Naive thymus-derived CD4-positive, alpha-beta T cell (primary cell): ENCODE measurements at regions of chr14 and their contacts with region 1.

Region 1: DNA sequence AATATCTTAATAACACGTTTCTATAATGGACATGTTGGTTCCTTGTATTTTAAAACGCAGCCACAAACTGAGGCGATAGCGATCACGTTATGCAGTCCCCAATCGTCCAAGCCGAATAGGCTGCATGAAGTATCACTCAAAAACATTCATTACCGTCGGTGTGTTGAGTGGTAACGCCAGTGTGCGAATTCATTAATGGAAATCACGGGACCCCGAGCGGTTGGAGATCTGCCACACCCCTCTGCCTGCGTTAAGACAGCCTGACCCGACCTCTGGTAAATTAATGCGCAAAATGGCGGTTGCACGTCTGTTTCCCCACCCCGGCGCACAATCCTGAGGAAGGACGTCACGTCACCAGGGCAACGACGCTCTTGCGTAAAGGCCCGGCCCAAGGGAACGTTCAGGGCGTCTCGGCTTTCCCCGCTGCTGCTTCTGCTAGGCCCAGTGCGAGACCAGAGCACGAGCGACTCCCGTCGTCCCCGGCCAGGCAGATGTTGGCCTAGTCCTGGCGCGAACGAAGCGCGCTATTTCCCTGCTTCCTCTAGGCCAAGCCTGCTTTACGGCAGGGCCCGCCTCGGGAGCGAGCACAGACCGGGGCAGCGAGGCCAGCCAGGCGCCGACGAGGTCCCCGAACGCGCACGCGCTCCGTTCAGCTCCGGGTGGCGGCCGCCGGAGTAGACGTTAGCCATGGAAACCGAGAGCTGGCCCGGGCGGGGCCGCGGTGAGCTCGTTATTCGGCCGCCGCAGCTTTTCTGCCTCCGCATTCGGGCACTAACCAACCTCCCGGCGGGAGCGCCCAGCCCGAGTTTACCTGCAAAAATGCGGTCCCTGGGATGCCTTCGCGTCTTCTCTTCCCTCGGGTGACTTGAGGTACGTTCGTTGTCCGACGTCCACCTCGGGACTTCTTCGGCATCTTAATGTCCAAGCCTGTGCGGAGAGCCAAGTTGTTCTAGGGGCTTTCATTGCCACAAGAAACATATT is at the start of gene PCNX4:
- DNase-seq: peak; percentile 79 to 95 (median 94)
- ATAC-seq: peak; percentile 95
- H3K4me3 ChIP-seq: peak within 1 kb of the TSS; percentile 94
- H3K4me3 Mint-ChIP-seq: peak within 1 kb of the TSS; percentile 88 to 98 (median 95)
- H3K27ac ChIP-seq: peak within 1 kb of the TSS; percentile 96
- H3K27ac Mint-ChIP-seq: peak within 1 kb of the TSS; percentile 90 to 99 (median 96)
- H3K4me1 ChIP-seq: peaks cover 14 to 16% of the 10 kb centered on the region in 2 donors
- H3K4me1 Mint-ChIP-seq: peaks cover 28 to 48% (median 41%) of the 10 kb centered on the region in 7 donors
- H3K27me3 ChIP-seq: peaks cover 0 to 4% of the 10 kb centered on the region in 2 donors
- H3K27me3 Mint-ChIP-seq: peaks cover 0 to 5% (median 0%) of the 10 kb centered on the region in 5 donors
- total RNA-seq, gene PCNX4: 34.9 to 48.2 (median 43.3) TPM

Region 2: GRCh38 chr14:59576332-59577294 is 515.2 kb before region 1 on chr14 and contains the start of gene CCDC175:
- CTCF ChIA-PET with region 1: no interaction called
- POLR2A ChIA-PET with region 1: no interaction called
- intact Hi-C with region 1: no loop called
- DNase-seq: peak; percentile 66 to 84 (median 78)
- ATAC-seq: peak; percentile 98
- H3K4me3 ChIP-seq: peak within 1 kb of the TSS; percentile 63
- H3K4me3 Mint-ChIP-seq: peak within 1 kb of the TSS; percentile 66 to 86 (median 78)
- H3K27ac ChIP-seq: no peak within 1 kb of the TSS
- H3K27ac Mint-ChIP-seq: peak within 1 kb of the TSS in 3 of 9 donors; percentile 8 to 26 (median 14)
- H3K4me1 ChIP-seq: peaks cover 3 to 4% of the 10 kb centered on the region in 2 donors
- H3K4me1 Mint-ChIP-seq: peaks cover 4 to 9% (median 7%) of the 10 kb centered on the region in 7 donors
- H3K27me3 ChIP-seq: no peaks in the 10 kb centered on the region
- H3K27me3 Mint-ChIP-seq: peaks cover 20 to 46% (median 29%) of the 10 kb centered on the region in 5 donors
- total RNA-seq, gene CCDC175: not detected

Region 3: GRCh38 chr14:59964251-59965007 is 127.4 kb before region 1 on chr14:
- CTCF ChIA-PET with region 1: interaction called, 3 read pairs
- POLR2A ChIA-PET with region 1: no interaction called
- intact Hi-C with region 1: loop called (anchors 1 kb)
- DNase-seq: peak in 6 of 9 donors; percentile 6 to 38 (median 20)
- ATAC-seq: peak; percentile 44
- H3K4me3 ChIP-seq: no peak overlapping the region
- H3K4me3 Mint-ChIP-seq: peak overlapping the region; percentile 77 to 95 (median 88)
- H3K27ac ChIP-seq: no peak overlapping the region
- H3K27ac Mint-ChIP-seq: peak overlapping the region in 8 of 9 donors; percentile 40 to 99 (median 88)
- H3K4me1 ChIP-seq: no peaks in the 10 kb centered on the region
- H3K4me1 Mint-ChIP-seq: peaks cover 3 to 14% (median 10%) of the 10 kb centered on the region in 7 donors
- H3K27me3 ChIP-seq: no peaks in the 10 kb centered on the region
- H3K27me3 Mint-ChIP-seq: peaks cover 0 to 15% (median 5%) of the 10 kb centered on the region in 5 donors

Region 4: DNA sequence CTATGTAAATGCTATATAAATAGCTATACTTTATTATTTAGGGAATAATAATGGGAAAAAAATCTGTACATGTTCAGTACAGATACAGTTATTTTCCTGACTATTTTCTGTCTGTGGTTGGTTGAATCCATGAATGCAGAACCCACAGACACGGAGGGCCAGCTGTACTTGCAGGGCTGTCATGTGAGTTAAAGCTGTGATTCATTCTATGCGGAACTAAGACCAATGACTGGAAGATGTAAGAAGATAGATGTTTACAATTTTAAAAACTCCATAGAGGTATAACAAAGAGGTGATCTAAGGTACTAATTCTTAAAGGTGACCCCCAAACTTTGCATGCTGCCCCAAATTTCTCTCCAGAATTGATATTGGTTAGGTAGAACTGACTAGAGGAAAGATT is 14.5 kb after region 1 on chr14:
- CTCF ChIA-PET with region 1: no interaction called
- POLR2A ChIA-PET with region 1: interaction called, 3 read pairs
- intact Hi-C with region 1: loop called in 1 of 2 experiments (anchors 2 kb)
- DNase-seq: no peak
- ATAC-seq: peak; percentile 60
- H3K4me3 ChIP-seq: no peak overlapping the region
- H3K4me3 Mint-ChIP-seq: no peak overlapping the region
- H3K27ac ChIP-seq: no peak overlapping the region
- H3K27ac Mint-ChIP-seq: peak overlapping the region in 3 of 9 donors; percentile 20 to 41 (median 25)
- H3K4me1 ChIP-seq: no peaks in the 10 kb centered on the region
- H3K4me1 Mint-ChIP-seq: peaks cover 20 to 63% (median 44%) of the 10 kb centered on the region in 7 donors
- H3K27me3 ChIP-seq: no peaks in the 10 kb centered on the region
- H3K27me3 Mint-ChIP-seq: no peaks in the 10 kb centered on the region

Region 5: DNA sequence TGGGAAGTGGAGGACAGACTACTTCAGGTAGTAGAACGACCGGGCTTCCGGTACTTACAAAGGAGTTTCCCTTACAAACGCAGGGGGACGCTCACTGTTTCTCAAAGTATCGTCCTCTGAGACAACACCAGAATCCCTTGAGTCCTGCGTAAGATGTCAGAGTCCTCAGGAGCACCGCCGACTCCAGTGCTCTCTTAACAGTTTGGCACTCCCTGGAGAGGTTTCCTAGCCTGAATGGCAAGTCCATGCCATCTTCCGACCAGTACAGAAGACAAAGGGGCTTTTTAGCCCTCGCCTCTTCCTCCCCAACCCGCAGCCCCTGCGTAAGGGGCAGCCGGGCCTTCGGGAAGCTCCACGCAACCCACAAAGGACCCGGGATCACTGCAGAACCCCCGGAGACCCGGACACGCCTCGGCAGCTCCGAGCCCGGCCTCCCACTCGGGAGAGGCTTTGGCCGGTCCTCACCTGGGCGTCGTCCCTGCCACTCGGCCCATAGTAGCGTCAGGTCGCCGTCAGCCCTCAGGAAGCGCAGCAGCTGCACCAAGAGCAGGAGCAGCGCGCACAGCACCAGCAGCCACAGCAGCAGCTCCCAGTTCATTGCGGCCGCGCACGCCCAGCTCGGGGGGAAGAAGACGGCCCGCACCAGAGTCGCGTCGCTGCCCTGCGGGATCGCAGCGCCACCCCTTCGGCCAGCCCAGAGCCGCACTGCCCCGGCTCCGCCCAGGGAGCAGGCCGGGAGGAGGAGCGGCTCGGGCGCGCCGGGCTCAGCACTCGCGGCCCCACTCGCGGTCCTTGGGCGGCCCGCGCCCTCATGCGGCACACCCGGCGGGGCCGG is 73.1 kb after region 1 on chr14 and contains the start of gene DHRS7:
- CTCF ChIA-PET with region 1: interaction called, 3 read pairs
- POLR2A ChIA-PET with region 1: interaction called, 32 read pairs
- intact Hi-C with region 1: loop called (anchors 1 kb)
- DNase-seq: peak; percentile 47 to 75 (median 60)
- ATAC-seq: peak; percentile 85
- H3K4me3 ChIP-seq: peak within 1 kb of the TSS; percentile 85
- H3K4me3 Mint-ChIP-seq: peak within 1 kb of the TSS; percentile 86 to 99 (median 95)
- H3K27ac ChIP-seq: peak within 1 kb of the TSS; percentile 90
- H3K27ac Mint-ChIP-seq: peak within 1 kb of the TSS; percentile 91 to 99 (median 97)
- H3K4me1 ChIP-seq: peaks cover 20 to 27% of the 10 kb centered on the region in 2 donors
- H3K4me1 Mint-ChIP-seq: peaks cover 22 to 53% (median 42%) of the 10 kb centered on the region in 7 donors
- H3K27me3 ChIP-seq: no peaks in the 10 kb centered on the region
- H3K27me3 Mint-ChIP-seq: no peaks in the 10 kb centered on the region
- total RNA-seq, gene DHRS7: 29.9 to 50.9 (median 38.0) TPM

Region 6: GRCh38 chr14:61761959-61762786 is 1670.3 kb after region 1 on chr14 and contains the start of gene SNAPC1:
- CTCF ChIA-PET with region 1: no interaction called
- POLR2A ChIA-PET with region 1: no interaction called
- intact Hi-C with region 1: loop called in 1 of 2 experiments (anchors 1 kb)
- DNase-seq: peak; percentile 92 to 98 (median 96)
- ATAC-seq: peak; percentile 97
- H3K4me3 ChIP-seq: peak within 1 kb of the TSS; percentile 94
- H3K4me3 Mint-ChIP-seq: peak within 1 kb of the TSS; percentile 96 to 100 (median 98)
- H3K27ac ChIP-seq: peak within 1 kb of the TSS; percentile 95
- H3K27ac Mint-ChIP-seq: peak within 1 kb of the TSS; percentile 98 to 100 (median 99)
- H3K4me1 ChIP-seq: peaks cover 13 to 17% of the 10 kb centered on the region in 2 donors
- H3K4me1 Mint-ChIP-seq: peaks cover 27 to 62% (median 53%) of the 10 kb centered on the region in 7 donors
- H3K27me3 ChIP-seq: no peaks in the 10 kb centered on the region
- H3K27me3 Mint-ChIP-seq: peaks cover 0 to 4% (median 0%) of the 10 kb centered on the region in 5 donors
- total RNA-seq, gene SNAPC1: 3.5 to 8.7 (median 5.1) TPM